ENCODE measurements at regions of chr22 and their contacts with region 1.

Region 1: GRCh38 chr22:23762842-23763578 is at the start of gene C22orf15:
- DNase-seq: no peak
- ATAC-seq: no peak
- H3K4me3 ChIP-seq: no peak within 1 kb of the TSS
- H3K27ac ChIP-seq: no peak within 1 kb of the TSS
- H3K4me1 ChIP-seq: peaks cover 15% of the 10 kb centered on the region
- H3K27me3 ChIP-seq: no peaks in the 10 kb centered on the region
- CTCF ChIP-seq: no peak
- POLR2A ChIP-seq: no peak
- total RNA-seq, gene C22orf15: not detected

Region 2: GRCh38 chr22:23849009-23850006 is 86.3 kb after region 1 on chr22:
- intact Hi-C with region 1: loop called (anchors 5 kb)
- DNase-seq: peak; percentile 81 to 90 (median 88)
- ATAC-seq: peak; percentile 89
- H3K4me3 ChIP-seq: no peak overlapping the region
- H3K27ac ChIP-seq: peak overlapping the region in 1 of 4 donors; percentile 9
- H3K4me1 ChIP-seq: peaks cover 15% of the 10 kb centered on the region
- H3K27me3 ChIP-seq: no peaks in the 10 kb centered on the region
- CTCF ChIP-seq: peak; percentile 94 to 98 (median 97)
- POLR2A ChIP-seq: no peak

Region 3: GRCh38 chr22:24068717-24069297 is 305.8 kb after region 1 on chr22:
- intact Hi-C with region 1: no loop called
- DNase-seq: no peak
- ATAC-seq: no peak
- H3K4me3 ChIP-seq: no peak overlapping the region
- H3K27ac ChIP-seq: no peak overlapping the region
- H3K4me1 ChIP-seq: peaks cover 18% of the 10 kb centered on the region
- H3K27me3 ChIP-seq: no peaks in the 10 kb centered on the region
- CTCF ChIP-seq: no peak
- POLR2A ChIP-seq: no peak